Body of pancreas (tissue), 4 donors: ENCODE measurements at regions of chr16 and their contacts with region 1.

Region 1: GRCh38 chr16:22174642-22175041 is 12.3 kb downstream of the SDR42E2 start:
- DNase-seq: no peak
- ATAC-seq: no peak
- H3K4me3 ChIP-seq: no peak overlapping the region
- H3K27ac ChIP-seq: no peak overlapping the region
- H3K4me1 ChIP-seq: no peaks in the 10 kb centered on the region
- H3K27me3 ChIP-seq: no peaks in the 10 kb centered on the region
- CTCF ChIP-seq: no peak
- POLR2A ChIP-seq: no peak

Region 2: GRCh38 chr16:21946889-21947635 is 227.6 kb before region 1 on chr16:
- intact Hi-C with region 1: loop called (anchors 10 kb)
- DNase-seq: no peak
- ATAC-seq: no peak
- H3K4me3 ChIP-seq: no peak overlapping the region
- H3K27ac ChIP-seq: no peak overlapping the region
- H3K4me1 ChIP-seq: peaks cover 24% of the 10 kb centered on the region
- H3K27me3 ChIP-seq: no peaks in the 10 kb centered on the region
- CTCF ChIP-seq: no peak
- POLR2A ChIP-seq: no peak